GM10248 (cell line): ENCODE measurements at regions of chr20 and their contacts with region 1.

Region 1: GRCh38 chr20:10654630-10655029 is 19.2 kb downstream of the JAG1 start:
- DNase-seq: peak; percentile 53
- CTCF ChIP-seq: no peak

Region 2: GRCh38 chr20:10639737-10640556 is 14.7 kb before region 1 on chr20:
- CTCF ChIA-PET with region 1: interaction called, 17 read pairs
- POLR2A ChIA-PET with region 1: no interaction called
- DNase-seq: no peak
- CTCF ChIP-seq: no peak

Region 3: DNA sequence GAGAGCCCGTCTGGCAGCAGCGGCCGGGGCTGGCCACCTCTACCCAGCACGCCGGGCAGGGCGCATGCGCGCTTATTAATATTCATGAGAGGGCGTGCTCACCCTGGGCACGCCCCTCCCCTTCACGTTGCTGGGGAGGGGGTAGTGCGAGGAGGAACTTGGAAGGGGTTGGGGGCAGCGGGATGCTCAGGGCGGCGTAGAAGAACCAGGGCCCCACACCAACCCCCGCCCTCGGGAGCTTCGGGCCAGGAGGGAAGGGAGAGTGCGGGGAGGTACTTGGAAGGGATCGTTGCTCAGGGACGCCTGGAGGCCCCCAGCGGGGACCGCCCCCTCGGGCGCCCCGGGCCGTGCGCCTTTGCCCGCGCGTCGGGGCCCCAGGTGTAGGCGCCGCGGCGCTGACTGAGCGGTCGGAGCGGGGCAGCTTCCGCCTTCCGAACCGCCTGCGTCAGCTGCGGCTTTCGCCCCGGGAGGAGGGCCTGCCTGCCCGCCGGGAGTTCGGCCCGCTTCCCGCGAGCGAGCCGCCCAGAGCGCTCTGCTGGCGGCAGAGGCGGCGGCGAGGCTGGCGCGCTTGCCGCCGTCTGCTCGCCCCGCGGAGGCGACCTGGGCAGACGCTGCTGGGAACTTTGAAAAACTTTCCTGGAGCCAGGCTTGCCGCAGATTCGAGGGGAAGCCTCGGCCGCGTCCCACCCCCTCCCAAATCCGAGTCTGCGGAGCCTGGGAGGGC is 19.5 kb after region 1 on chr20 and contains the start of gene JAG1:
- CTCF ChIA-PET with region 1: interaction called, 73 read pairs
- POLR2A ChIA-PET with region 1: no interaction called
- DNase-seq: peak; percentile 93
- CTCF ChIP-seq: no peak

Region 4: GRCh38 chr20:10793766-10794165 is 139.1 kb after region 1 on chr20:
- CTCF ChIA-PET with region 1: no interaction called
- POLR2A ChIA-PET with region 1: no interaction called
- DNase-seq: no peak
- CTCF ChIP-seq: no peak

Region 5: DNA sequence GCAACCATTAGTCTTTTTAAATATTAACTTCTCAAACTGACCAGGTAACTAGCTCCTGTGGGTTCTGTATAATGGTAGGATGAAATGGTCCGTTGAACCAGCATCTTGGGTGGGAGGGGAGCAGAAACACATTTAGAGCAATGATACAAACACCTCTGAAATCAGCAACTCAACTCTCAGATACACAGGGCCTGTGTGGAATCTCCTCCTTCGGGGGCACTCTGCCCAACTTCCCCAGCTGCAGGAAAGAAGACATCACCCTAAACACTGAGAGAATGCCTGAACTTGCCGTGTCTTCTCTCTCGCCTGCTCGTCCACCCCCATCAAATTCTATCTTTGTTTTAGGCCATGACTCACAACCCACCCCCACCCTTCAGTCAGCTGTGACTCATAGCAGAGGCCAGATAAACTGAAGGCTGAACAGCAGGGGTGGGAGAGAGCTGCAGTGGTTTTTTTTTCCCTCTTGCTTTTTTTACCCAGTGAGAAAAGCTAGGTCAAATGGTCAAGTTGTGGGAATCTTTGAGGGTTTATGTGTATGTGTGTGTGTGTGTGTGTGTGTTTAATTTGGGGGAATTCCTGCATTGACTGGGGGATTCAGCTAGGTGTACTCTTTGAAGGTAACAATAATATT is 612.6 kb after region 1 on chr20:
- CTCF ChIA-PET with region 1: interaction called, 3 read pairs
- POLR2A ChIA-PET with region 1: interaction called, 10 read pairs
- DNase-seq: peak; percentile 68
- CTCF ChIP-seq: no peak